Activated naive CD4-positive, alpha-beta T cell treated with anti-CD3 and anti-CD28 coated beads for 36 hours (primary cell): ENCODE measurements at regions of chr19 and their contacts with region 1.

Region 1: DNA sequence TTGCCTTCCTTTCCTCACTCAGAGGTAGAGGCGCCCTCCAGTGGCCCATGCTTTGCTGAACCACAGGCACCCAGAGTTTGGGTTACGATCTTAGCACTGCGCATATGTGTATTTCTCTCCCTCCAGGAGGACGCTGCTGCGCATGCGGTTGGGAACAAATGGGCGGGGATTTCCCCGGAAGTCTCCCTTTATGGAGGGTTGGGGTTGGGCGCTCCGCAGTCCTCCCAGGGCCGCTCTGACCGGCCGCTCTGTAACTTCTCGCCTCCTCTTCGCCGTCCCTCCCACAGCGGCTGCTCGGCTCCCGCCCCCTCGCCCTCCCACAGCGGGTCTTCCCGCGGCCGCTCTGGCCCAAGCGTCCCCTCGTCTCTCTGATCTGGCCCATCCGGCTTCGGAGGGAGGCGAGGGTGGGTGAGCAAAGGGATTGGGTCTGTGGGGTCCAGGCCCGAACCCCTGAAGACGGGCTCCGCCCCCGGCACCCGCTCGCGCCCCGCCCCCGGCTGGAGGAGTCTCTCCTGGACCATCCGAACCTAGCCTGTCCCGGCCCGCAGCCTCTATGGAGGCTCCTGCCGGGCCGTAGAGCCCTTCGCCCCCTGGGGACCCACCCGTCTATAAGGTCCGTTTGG is at the start of gene MEGF8:
- DNase-seq: peak; percentile 100
- H3K4me3 Mint-ChIP-seq: peak within 1 kb of the TSS; percentile 81
- H3K27ac Mint-ChIP-seq: peak within 1 kb of the TSS; percentile 16
- H3K4me1 Mint-ChIP-seq: peaks cover 13% of the 10 kb centered on the region
- H3K27me3 Mint-ChIP-seq: peaks cover 14% of the 10 kb centered on the region
- total RNA-seq, gene MEGF8: 3.3 to 4.0 TPM

Region 2: DNA sequence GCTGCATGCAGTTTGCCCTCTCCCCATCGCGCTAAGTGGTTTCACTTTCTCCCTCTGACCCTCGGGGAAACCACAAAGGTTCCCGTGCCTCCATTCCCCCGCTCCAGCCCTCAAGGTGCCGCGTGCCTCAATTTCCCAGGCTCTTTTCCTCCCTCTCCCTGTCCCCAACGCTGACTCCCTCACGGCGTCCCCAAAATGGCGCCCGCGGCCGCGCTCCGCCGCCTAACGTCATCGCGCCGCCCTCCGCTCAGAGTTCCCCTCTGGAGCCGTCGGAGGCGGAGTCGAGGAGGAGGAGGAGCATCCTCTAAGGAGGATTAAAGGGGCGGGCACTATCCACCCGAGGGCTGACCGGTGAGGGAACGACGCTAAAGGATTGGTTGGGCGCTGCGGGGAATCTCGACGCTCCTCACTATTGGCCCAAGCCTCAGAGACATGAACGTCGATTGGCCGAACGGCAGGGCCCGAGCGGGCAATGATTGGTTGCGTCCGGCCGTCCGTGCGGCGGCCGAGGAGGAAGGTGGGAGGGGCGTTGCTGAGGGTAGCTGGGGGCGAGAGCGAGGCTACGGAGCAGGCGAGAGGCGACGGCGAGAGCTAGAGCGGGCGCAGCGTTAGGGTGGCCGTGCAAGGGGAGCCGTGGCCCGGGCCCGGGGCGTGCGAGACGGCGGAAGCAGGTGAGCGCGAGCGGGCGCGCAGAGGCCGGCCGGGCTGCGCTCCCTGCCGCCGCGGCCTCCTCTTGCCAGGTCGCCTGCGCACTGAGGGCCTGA is 249.6 kb before region 1 on chr19 and contains the start of gene ZNF574:
- CTCF ChIA-PET with region 1: no interaction called
- intact Hi-C with region 1: loop called (anchors 1 kb)
- DNase-seq: peak; percentile 99
- H3K4me3 Mint-ChIP-seq: peak within 1 kb of the TSS; percentile 97
- H3K27ac Mint-ChIP-seq: peak within 1 kb of the TSS; percentile 96
- H3K4me1 Mint-ChIP-seq: peaks cover 22% of the 10 kb centered on the region
- H3K27me3 Mint-ChIP-seq: no peaks in the 10 kb centered on the region
- total RNA-seq, gene ZNF574: 8.4 to 8.8 TPM

Region 3: DNA sequence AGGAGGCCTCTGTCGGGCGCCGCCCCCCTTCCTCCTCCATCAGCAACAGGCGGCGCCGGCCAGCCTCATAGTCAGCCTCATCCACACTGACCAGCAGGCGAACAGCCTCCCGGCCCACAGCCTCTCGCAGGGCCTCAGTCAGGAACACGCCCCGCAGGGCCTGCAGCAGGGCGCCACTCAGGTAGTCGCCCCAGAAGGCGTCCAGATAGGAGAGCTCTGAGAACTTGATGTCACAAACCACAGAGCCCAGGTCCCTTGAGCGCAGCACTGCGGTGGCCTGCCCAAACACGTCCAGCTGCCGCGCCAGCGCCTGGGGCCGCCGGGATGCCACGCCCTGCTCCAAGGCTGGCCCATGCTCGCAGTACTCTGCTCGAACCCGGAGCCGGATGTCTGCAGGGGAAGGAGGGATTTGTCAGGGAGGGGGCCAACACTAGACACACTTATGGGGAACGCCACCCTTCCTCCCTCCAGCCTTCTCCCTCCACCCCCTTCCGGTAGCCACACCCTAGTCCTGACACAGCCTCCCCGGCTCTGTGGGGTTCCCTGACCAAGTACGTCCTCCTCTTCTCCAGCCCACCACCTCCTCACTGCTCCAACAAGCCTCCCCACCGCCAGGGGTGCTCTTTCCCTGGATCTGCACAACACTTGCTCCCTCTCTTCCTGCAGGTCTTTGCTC is 125.8 kb before region 1 on chr19:
- CTCF ChIA-PET with region 1: interaction called, 3 read pairs
- intact Hi-C with region 1: loop called (anchors 1 kb)
- DNase-seq: peak; percentile 88
- H3K4me3 Mint-ChIP-seq: peak overlapping the region; percentile 58
- H3K27ac Mint-ChIP-seq: peak overlapping the region; percentile 96
- H3K4me1 Mint-ChIP-seq: peaks cover 79% of the 10 kb centered on the region
- H3K27me3 Mint-ChIP-seq: no peaks in the 10 kb centered on the region

Region 4: DNA sequence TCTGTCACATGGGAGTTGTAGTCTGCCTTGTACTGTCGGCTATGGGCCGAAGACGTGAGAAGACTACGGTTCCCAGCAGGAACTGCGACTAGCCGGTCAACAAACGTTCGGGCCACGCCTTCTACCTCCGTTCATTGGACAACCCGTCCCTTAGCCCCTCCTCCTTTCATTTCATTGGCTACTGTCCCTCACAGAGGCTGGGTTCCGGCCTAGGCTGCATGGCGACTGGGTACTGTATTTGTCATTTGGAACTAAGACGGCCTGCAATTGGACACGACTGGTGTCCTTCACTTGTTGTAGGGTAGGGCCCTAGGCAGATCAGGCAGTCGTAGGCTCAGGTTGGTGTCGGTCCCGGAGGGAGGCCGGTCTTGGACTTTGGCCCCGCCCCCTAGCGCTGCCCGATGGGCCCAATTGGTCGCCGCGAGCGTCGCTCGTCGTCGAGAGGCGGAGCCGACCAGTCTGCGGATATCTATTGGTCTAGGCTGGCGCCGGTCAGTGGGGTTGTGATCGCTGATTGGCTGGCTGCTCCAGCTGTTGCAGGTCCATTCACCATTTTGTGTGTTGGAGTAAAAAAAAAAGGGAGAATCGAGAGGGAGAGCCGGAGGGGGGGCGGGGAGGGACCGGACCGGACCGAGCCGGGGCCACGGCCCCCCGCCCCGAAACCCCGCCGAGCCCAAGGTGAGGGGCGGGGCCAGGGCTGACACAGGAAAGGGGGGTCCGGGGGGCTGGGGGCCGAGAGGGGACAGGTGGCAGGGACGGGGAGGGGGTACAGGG is 56.5 kb before region 1 on chr19 and contains the start of gene CIC:
- CTCF ChIA-PET with region 1: no interaction called
- intact Hi-C with region 1: loop called (anchors 1 kb)
- DNase-seq: peak; percentile 100
- H3K4me3 Mint-ChIP-seq: no peak within 1 kb of the TSS
- H3K27ac Mint-ChIP-seq: peak within 1 kb of the TSS; percentile 99
- H3K4me1 Mint-ChIP-seq: peaks cover 30% of the 10 kb centered on the region
- H3K27me3 Mint-ChIP-seq: no peaks in the 10 kb centered on the region
- total RNA-seq, gene CIC: 60.2 to 61.5 TPM

Region 5: GRCh38 chr19:42288881-42289555 is 36.4 kb before region 1 on chr19:
- CTCF ChIA-PET with region 1: no interaction called
- intact Hi-C with region 1: no loop called
- DNase-seq: no peak
- H3K4me3 Mint-ChIP-seq: no peak overlapping the region
- H3K27ac Mint-ChIP-seq: no peak overlapping the region
- H3K4me1 Mint-ChIP-seq: peaks cover 22% of the 10 kb centered on the region
- H3K27me3 Mint-ChIP-seq: no peaks in the 10 kb centered on the region

Region 6: GRCh38 chr19:42301656-42302203 is 23.7 kb before region 1 on chr19 and contains the start of gene PRR19:
- CTCF ChIA-PET with region 1: interaction called, 6 read pairs
- intact Hi-C with region 1: loop called (anchors 1 kb)
- DNase-seq: no peak
- H3K4me3 Mint-ChIP-seq: peak within 1 kb of the TSS; percentile 85
- H3K27ac Mint-ChIP-seq: peak within 1 kb of the TSS; percentile 85
- H3K4me1 Mint-ChIP-seq: peaks cover 19% of the 10 kb centered on the region
- H3K27me3 Mint-ChIP-seq: no peaks in the 10 kb centered on the region
- total RNA-seq, gene PRR19: 0.27 to 0.43 TPM

Region 7: GRCh38 chr19:42363614-42364346 is 38.4 kb after region 1 on chr19:
- CTCF ChIA-PET with region 1: no interaction called
- intact Hi-C with region 1: no loop called
- DNase-seq: no peak
- H3K4me3 Mint-ChIP-seq: no peak overlapping the region
- H3K27ac Mint-ChIP-seq: no peak overlapping the region
- H3K4me1 Mint-ChIP-seq: no peaks in the 10 kb centered on the region
- H3K27me3 Mint-ChIP-seq: no peaks in the 10 kb centered on the region

Region 8: DNA sequence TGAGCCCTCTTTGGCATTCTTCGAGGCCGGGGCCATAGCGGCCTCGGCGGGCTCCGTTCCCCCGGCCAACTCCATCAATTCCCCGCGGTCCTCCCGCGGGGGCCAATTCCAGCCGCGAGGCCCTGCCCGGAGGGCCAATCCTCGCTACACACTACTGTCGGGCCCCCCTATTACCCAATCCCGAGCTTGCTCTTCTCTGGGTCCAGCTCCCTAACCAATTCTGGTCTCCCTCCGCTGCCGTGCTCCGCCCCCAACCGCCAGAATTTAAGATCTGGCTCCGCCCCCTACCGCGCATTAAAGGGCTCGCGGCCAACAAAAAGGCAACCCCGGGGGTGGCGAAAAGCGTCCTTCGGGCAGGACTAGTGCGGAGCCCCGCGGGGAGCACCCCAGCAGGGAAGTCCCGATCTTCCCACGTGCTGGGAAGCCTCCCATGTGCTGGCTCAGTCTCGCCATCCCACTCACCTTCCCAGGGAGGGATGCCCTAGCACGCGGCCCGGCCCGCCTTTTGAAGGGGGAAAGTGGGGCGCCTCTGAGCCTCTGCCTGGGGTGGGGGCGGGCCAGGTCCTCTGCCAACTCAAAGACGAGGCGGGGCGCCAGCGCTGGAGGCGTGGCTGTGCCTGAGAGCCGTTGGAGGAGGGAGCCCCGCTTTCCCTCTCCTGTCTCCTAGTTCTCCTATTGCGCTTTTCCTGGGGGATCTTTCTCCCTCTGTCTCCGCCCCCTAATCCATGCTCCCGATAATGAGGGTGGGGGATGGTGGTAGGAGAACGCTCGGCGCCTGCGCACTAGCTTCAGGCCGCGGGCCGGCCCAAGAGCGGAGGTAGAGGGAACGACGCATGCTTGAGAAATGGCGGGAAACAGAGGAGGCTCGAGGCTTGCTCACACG is 98.3 kb after region 1 on chr19:
- CTCF ChIA-PET with region 1: no interaction called
- intact Hi-C with region 1: loop called (anchors 5 kb)
- DNase-seq: peak; percentile 96
- H3K4me3 Mint-ChIP-seq: peak overlapping the region; percentile 93
- H3K27ac Mint-ChIP-seq: peak overlapping the region; percentile 86
- H3K4me1 Mint-ChIP-seq: peaks cover 33% of the 10 kb centered on the region
- H3K27me3 Mint-ChIP-seq: no peaks in the 10 kb centered on the region